ENCODE measurements at regions of chr7 and their contacts with region 1.

Region 1: GRCh38 chr7:12888717-12889116 is 201.3 kb downstream of the ARL4A start:
- DNase-seq: no peak
- H3K4me3 ChIP-seq: no peak overlapping the region
- H3K27ac ChIP-seq: no peak overlapping the region
- H3K4me1 ChIP-seq: no peaks in the 10 kb centered on the region
- CTCF ChIP-seq: no peak

Region 2: GRCh38 chr7:12802098-12802497 is 86.6 kb before region 1 on chr7:
- CTCF ChIA-PET with region 1: no interaction called
- POLR2A ChIA-PET with region 1: interaction called, 10 read pairs
- intact Hi-C with region 1: no loop called
- DNase-seq: no peak
- H3K4me3 ChIP-seq: no peak overlapping the region
- H3K27ac ChIP-seq: no peak overlapping the region
- H3K4me1 ChIP-seq: no peaks in the 10 kb centered on the region
- CTCF ChIP-seq: no peak

Region 3: GRCh38 chr7:12827920-12828319 is 60.8 kb before region 1 on chr7:
- CTCF ChIA-PET with region 1: no interaction called
- POLR2A ChIA-PET with region 1: no interaction called
- intact Hi-C with region 1: no loop called
- DNase-seq: no peak
- H3K4me3 ChIP-seq: no peak overlapping the region
- H3K27ac ChIP-seq: no peak overlapping the region
- H3K4me1 ChIP-seq: no peaks in the 10 kb centered on the region
- CTCF ChIP-seq: no peak

Region 4: GRCh38 chr7:12993025-12993424 is 104.3 kb after region 1 on chr7:
- CTCF ChIA-PET with region 1: no interaction called
- POLR2A ChIA-PET with region 1: no interaction called
- intact Hi-C with region 1: no loop called
- DNase-seq: no peak
- H3K4me3 ChIP-seq: no peak overlapping the region
- H3K27ac ChIP-seq: no peak overlapping the region
- H3K4me1 ChIP-seq: no peaks in the 10 kb centered on the region
- CTCF ChIP-seq: no peak

Measured in OCI-LY7 (cell line).